K562 (cell line): ENCODE measurements at regions of chr2 and their contacts with region 1.

Region 1: GRCh38 chr2:68467077-68467960 is at the starts of genes APLF and FBXO48:
- DNase-seq: peak; percentile 87 to 99 (median 92)
- ATAC-seq: peak; percentile 97
- H3K4me3 ChIP-seq: peak within 1 kb of the TSS; percentile 76
- H3K27ac ChIP-seq: peak within 1 kb of the TSS; percentile 85
- H3K4me1 ChIP-seq: peaks cover 8 to 30% of the 10 kb centered on the region in 2 experiments; a peak in 4 of 5 replicates
- H3K27me3 ChIP-seq: no peaks in the 10 kb centered on the region; a peak in 1 of 5 replicates
- CTCF ChIP-seq: no peak
- EP300 ChIP-seq: peak; percentile 13; the same call in 1 of the 2 replicates
- POLR2A ChIP-seq: peak; percentile 79
- RAD21 ChIP-seq: no peak
- polyA plus RNA-seq, gene APLF: 0.07 to 0.15 TPM
- polyA plus RNA-seq, gene FBXO48: 0.74 to 0.79 TPM

Region 2: DNA sequence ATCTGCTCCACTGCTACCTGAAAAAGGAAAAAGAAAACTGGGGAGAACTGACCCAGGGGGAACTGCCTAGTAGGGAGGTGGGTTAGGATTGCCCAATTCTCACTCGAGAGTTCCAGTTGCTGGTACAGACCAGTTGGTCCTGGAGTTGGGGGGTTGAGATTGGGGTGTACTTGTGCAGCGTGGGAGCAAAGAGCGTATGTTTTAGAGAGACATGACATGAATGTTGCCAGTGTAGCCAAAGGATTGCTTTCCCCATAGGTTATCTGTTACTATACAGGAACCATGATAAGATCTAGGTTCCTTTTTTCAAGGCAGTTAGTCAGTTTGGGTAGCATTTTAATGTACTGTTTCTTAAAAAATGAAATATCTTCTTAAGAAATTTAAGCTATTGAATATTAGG is 68.7 kb after region 1 on chr2:
- CTCF ChIA-PET with region 1: no interaction called
- POLR2A ChIA-PET with region 1: no interaction called
- in situ Hi-C with region 1: no loop called
- intact Hi-C with region 1: no loop called
- DNase-seq: peak; percentile 10 to 53 (median 14)
- ATAC-seq: peak; percentile 59
- H3K4me3 ChIP-seq: no peak overlapping the region
- H3K27ac ChIP-seq: peak overlapping the region; percentile 33; the same call in 1 of the 3 replicates
- H3K4me1 ChIP-seq: peaks cover 0 to 10% of the 10 kb centered on the region in 2 experiments; a peak in 4 of 5 replicates
- H3K27me3 ChIP-seq: no peaks in the 10 kb centered on the region
- CTCF ChIP-seq: no peak
- EP300 ChIP-seq: peak; percentile 51
- POLR2A ChIP-seq: no peak
- RAD21 ChIP-seq: no peak

Region 3: DNA sequence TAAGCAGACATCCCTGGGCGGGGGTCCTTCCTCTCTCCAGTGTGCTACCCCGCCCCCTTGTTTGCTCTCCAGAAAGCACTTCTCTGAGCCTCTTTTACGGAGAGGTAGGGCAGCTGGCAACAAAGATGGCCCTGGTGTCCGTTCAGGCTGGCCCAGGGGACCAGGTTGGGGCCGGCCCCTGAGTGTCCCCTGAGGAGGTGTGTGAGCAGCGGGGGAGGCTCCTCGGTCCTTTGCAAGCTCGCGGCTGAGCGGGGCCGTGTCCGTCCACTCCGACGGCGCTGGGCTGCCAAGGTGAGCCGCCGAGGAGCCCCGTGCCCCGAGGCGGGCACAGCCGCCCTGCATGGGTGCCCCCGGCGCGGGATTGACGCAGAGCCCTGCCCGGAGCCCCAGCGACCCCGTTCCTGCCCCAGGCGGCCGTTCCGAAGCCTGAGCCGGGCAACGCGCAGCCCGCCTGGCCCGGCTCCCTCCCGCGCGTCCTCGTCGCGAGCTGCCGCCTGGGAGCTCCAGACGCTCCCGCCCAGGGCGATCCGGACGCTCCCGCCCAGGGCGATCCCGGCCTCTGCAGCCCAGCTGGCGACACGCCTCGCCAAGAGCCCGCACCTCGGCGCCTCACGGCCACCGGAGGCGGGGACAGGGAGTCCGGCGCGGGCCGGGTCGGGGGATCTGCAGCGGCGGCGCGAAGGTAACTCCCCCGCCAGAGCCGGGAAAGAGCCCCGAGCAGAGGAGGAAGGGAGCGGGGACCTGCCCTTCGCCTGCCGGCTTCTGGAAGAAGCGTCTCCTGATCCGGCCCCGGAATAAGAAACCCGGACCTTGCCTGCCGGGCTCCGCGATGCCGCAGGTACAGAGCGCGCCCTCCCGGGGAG is 175.9 kb after region 1 on chr2 and contains the start of gene PROKR1:
- CTCF ChIA-PET with region 1: interaction called, 8 read pairs
- POLR2A ChIA-PET with region 1: no interaction called
- in situ Hi-C with region 1: no loop called
- intact Hi-C with region 1: loop called (anchors 2 kb)
- DNase-seq: peak; percentile 53 to 67 (median 58)
- ATAC-seq: peak; percentile 88
- H3K4me3 ChIP-seq: peak within 1 kb of the TSS; percentile 55
- H3K27ac ChIP-seq: no peak within 1 kb of the TSS
- H3K4me1 ChIP-seq: peaks cover 0 to 12% of the 10 kb centered on the region in 2 experiments; a peak in 3 of 5 replicates
- H3K27me3 ChIP-seq: peaks cover 2 to 12% of the 10 kb centered on the region in 2 experiments; a peak in 1 of 5 replicates
- CTCF ChIP-seq: peak in 1 of 3 experiments; percentile 23; a peak in 1 of 6 replicates
- EP300 ChIP-seq: no peak
- POLR2A ChIP-seq: no peak
- RAD21 ChIP-seq: peak; percentile 34 to 57; a peak in 3 of 4 replicates
- polyA plus RNA-seq, gene PROKR1: 0.03 TPM in 1 of 2 experiments, not detected in the other

Region 4: DNA sequence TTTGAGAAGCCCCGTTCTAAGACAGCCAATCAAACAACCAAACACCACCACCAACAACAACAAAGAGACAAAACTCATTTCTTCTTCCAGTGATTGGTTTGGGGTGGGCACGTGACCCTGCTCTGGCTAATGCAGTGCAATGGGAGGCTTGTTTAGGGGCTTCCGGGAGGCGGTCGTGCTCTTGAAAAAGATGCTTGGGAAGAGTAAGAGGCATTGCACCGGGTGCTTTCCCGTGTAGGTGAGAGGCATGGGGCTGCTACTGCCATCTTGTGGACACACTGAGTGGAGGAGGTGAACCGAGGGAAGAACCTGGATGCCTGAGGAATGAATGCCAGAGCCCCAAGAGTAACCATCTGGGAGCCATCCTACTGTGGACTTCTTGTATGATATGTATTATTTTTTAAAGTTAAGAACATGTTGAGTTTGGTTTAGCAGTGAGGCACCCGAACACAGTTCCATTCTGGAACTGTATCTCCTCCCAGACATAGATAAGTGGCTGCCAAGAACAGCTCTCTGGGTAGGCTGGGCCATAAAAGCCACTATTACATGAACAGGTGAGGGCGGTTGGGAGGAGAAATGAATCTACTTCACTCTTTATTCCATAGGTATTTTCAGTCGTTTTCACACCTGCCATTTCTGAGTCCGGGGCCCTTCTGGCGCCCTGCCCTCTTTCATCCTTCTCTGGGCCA is 248.2 kb after region 1 on chr2:
- CTCF ChIA-PET with region 1: interaction called, 7 read pairs
- POLR2A ChIA-PET with region 1: interaction called, 3 read pairs
- in situ Hi-C with region 1: no loop called
- intact Hi-C with region 1: loop called (anchors 1 kb)
- DNase-seq: peak; percentile 72 to 81 (median 76)
- ATAC-seq: peak; percentile 99
- H3K4me3 ChIP-seq: no peak overlapping the region
- H3K27ac ChIP-seq: no peak overlapping the region
- H3K4me1 ChIP-seq: peaks cover 0 to 6% of the 10 kb centered on the region in 2 experiments; a peak in 2 of 5 replicates
- H3K27me3 ChIP-seq: no peaks in the 10 kb centered on the region
- CTCF ChIP-seq: peak; percentile 84 to 88 (median 84)
- EP300 ChIP-seq: no peak
- POLR2A ChIP-seq: no peak
- RAD21 ChIP-seq: peak; percentile 54 to 84

Region 5: GRCh38 chr2:68918497-68918896 is 451.2 kb after region 1 on chr2:
- CTCF ChIA-PET with region 1: no interaction called
- POLR2A ChIA-PET with region 1: no interaction called
- in situ Hi-C with region 1: loop called (anchors 5 kb)
- intact Hi-C with region 1: no loop called
- DNase-seq: peak in 1 of 4 experiments; percentile 30
- ATAC-seq: no peak
- H3K4me3 ChIP-seq: no peak overlapping the region
- H3K27ac ChIP-seq: no peak overlapping the region
- H3K4me1 ChIP-seq: peaks cover 0 to 48% of the 10 kb centered on the region in 2 experiments; a peak in 4 of 5 replicates
- H3K27me3 ChIP-seq: no peaks in the 10 kb centered on the region
- CTCF ChIP-seq: no peak
- EP300 ChIP-seq: no peak
- POLR2A ChIP-seq: no peak
- RAD21 ChIP-seq: no peak